PC-9 (cell line): ENCODE measurements at regions of chr1 and their contacts with region 1.

Region 1: GRCh38 chr1:234564642-234565037 is 45.3 kb downstream of the IRF2BP2 start:
- DNase-seq: peak; percentile 88 to 99
- H3K4me3 ChIP-seq: no peak overlapping the region
- H3K27ac ChIP-seq: peak overlapping the region; percentile 90
- H3K4me1 ChIP-seq: peaks cover 45% of the 10 kb centered on the region
- H3K27me3 ChIP-seq: no peaks in the 10 kb centered on the region
- CTCF ChIP-seq: no peak

Region 2: GRCh38 chr1:234515821-234516241 is 48.8 kb before region 1 on chr1:
- CTCF ChIA-PET with region 1: no interaction called
- POLR2A ChIA-PET with region 1: interaction called, 12 read pairs
- intact Hi-C with region 1: no loop called
- DNase-seq: peak in 1 of 2 experiments; percentile 81
- H3K4me3 ChIP-seq: peak overlapping the region; percentile 3; the same call in 1 of the 2 replicates
- H3K27ac ChIP-seq: peak overlapping the region; percentile 82
- H3K4me1 ChIP-seq: peaks cover 37% of the 10 kb centered on the region
- H3K27me3 ChIP-seq: no peaks in the 10 kb centered on the region
- CTCF ChIP-seq: no peak

Region 3: DNA sequence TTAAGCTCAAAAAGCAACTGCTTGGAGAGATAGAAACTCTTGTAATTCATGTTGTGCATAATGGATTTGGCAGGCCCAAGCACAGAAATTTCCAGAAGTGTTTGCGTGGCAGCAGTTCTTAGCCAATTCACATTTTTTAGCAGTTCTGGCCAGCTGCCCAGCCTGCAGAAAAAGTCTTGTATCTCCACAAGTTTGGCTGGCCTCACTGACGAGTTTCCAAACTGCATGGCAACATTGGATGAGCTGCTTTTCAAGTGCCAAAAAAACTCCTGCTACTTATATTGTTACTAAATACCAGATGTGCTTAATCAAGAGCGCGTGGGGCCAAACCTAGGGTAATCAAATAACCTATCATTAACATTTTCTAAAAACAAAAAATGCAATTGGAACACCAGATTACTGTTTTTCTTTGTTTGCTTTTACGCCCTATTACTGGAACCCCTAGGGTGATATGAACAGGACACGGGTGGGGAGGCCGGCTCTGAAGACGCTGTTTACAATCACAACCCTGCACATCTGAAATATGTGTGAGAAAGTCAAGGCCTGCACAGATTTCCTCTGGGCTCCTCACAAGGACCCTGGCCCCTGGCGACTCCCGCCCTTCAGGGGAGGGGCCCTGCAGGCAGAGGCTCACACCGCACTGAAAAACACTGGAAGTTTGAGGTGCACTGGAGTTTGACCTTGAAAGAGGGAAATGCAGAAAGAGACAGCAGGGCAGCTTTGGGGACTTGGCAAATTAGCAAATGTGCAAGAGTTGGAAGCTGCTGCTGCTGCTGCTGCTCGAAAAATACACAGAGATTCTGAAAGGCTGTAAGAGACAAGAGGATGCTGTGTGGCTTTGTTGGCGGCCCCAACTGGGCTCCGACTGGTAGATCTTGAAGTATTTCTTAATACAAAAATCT is 30.4 kb before region 1 on chr1:
- CTCF ChIA-PET with region 1: no interaction called
- POLR2A ChIA-PET with region 1: interaction called, 4 read pairs
- intact Hi-C with region 1: loop called (anchors 2 kb)
- DNase-seq: peak; percentile 28 to 56
- H3K4me3 ChIP-seq: no peak overlapping the region
- H3K27ac ChIP-seq: peak overlapping the region; percentile 90
- H3K4me1 ChIP-seq: peaks cover 49% of the 10 kb centered on the region
- H3K27me3 ChIP-seq: no peaks in the 10 kb centered on the region
- CTCF ChIP-seq: no peak